ENCODE measurements at regions of chr4 and their contacts with region 1.

Region 1: DNA sequence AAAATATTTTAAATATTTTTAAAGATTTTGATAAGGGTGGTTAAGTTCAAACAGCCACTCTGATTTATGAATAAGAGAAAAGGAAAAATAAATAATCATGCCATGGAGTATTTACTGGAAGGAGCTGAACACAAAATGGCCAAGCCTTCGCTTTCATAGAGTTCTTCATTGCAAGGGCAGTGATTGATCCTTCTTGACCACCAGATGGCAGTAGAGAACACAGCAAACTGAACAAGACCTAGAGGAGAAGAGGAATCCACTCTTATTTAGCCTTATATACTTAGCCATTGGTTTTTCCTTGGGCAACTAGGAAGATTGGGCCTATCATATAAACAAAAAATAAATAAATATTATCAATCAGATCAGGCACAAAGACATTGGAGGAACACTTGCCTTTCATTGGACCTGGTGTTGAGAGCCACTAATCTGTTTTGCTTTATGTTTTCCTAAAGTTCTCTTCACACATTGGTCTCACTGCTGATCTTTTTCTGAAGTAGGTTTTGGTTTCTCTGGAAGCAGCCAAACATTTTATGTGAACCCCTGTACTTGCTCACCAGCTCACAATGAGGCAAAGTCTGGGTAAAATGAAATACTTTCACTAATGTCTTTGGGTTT is 58.1 kb upstream of the PARM1 start:
- DNase-seq: no peak
- ATAC-seq: peak; percentile 90 to 92

Region 2: GRCh38 chr4:75110061-75110460 is 235.2 kb after region 1 on chr4:
- intact Hi-C with region 1: loop called in 1 of 2 experiments (anchors 10 kb)
- DNase-seq: no peak
- ATAC-seq: no peak

Region 3: DNA sequence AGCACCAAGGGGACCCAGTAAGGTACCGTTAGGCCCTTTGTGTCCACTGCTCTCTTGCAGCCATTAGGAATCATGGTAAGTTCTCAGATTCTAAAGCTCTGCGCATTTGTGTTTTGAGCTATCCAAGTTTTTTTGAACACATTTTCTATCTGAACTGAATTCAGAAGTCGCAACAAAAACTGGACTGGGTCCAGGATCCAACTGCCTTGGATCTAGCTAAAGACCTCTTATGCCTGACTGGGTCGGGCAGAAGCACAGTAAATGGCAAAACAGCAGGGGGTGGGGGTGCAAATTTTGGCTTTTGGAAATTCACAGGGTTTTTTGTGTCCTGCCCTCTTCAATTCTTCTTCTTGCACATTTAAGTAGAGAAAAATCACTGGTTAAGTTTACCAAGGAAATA is 609.3 kb after region 1 on chr4:
- intact Hi-C with region 1: loop called in 1 of 2 experiments (anchors 10 kb)
- DNase-seq: no peak
- ATAC-seq: no peak